Panc1 (cell line): ENCODE measurements at regions of chrX and their contacts with region 1.

Region 1: DNA sequence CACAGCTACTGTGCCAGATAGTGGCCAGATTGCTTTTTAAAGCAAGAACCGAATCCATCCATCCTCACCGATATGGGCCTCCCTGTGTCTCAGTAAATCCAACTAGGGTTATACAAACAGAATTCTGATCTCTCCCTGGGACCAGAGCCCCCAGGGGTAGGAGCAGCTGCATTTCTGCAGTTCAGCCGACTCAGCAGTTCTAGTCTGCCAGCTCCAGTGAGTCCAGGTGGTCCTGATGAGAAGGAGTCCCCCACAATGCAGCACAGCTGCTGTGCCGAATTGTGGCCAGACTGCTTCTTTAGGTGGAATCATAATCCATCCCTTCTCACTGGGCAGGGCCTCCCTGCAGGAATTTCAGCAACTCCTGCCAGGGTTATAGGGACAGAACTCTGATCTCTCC is 532.9 kb downstream of the ACTRT1 start:
- DNase-seq: no peak
- ATAC-seq: no peak
- H3K4me3 ChIP-seq: no peak overlapping the region
- H3K27ac ChIP-seq: no peak overlapping the region
- H3K4me1 ChIP-seq: no peaks in the 10 kb centered on the region
- H3K27me3 ChIP-seq: no peaks in the 10 kb centered on the region
- CTCF ChIP-seq: no peak

Region 2: GRCh38 chrX:127884921-127885320 is 365.6 kb after region 1 on chrX:
- CTCF ChIA-PET with region 1: no interaction called
- POLR2A ChIA-PET with region 1: interaction called, 14 read pairs
- in situ Hi-C with region 1: no loop called
- intact Hi-C with region 1: no loop called
- DNase-seq: no peak
- ATAC-seq: no peak
- H3K4me3 ChIP-seq: no peak overlapping the region
- H3K27ac ChIP-seq: no peak overlapping the region
- H3K4me1 ChIP-seq: no peaks in the 10 kb centered on the region
- H3K27me3 ChIP-seq: no peaks in the 10 kb centered on the region
- CTCF ChIP-seq: no peak